Caco-2 (cell line): ENCODE measurements at regions of chr10 and their contacts with region 1.

Region 1: GRCh38 chr10:86899670-86900276 is 57.6 kb downstream of the MMRN2 start:
- DNase-seq: peak; percentile 55 to 76
- H3K4me3 ChIP-seq: no peak overlapping the region
- H3K4me3 Mint-ChIP-seq: no peak overlapping the region
- H3K27ac Mint-ChIP-seq: peak overlapping the region; percentile 27
- H3K4me1 ChIP-seq: no peaks in the 10 kb centered on the region
- H3K4me1 Mint-ChIP-seq: peaks cover 12% of the 10 kb centered on the region
- H3K27me3 ChIP-seq: no peaks in the 10 kb centered on the region
- H3K27me3 Mint-ChIP-seq: no peaks in the 10 kb centered on the region
- CTCF ChIP-seq: peak; percentile 72 to 83

Region 2: DNA sequence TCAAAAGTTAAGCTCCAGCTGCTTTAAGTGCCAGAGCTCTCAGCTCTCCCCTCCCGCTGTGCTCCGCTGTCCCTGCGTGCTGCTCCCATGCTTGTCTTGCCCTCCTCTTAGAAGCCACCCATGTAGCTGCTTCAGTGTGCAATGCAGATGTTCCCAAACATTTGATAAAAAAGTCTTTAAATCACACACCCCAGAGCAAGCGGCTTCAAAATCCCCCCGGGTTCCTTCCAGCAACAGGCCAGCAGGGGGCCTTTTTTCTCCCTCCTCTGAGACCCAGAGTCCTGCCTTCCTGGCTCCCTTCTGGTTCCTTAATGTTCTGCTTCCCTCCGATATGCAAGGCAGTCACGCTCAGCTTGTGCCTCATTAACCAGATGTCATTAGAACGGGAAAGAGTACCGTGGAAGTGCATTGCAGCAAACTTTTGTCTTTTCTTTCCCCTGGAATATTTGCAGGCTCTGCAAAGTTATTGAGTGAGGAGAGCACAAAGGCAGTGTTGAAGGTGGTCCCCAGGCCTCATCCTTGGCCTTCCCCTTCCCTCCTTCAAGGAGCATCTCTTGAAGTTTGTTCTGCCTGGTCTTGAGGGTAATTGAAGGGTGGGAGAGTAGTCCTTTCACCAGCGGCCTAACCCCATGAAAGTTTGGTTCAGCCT is 205.9 kb before region 1 on chr10:
- CTCF ChIA-PET with region 1: interaction called, 5 read pairs
- POLR2A ChIA-PET with region 1: no interaction called
- intact Hi-C with region 1: loop called (anchors 1 kb)
- DNase-seq: peak in 1 of 2 experiments; percentile 60
- H3K4me3 ChIP-seq: no peak overlapping the region
- H3K4me3 Mint-ChIP-seq: no peak overlapping the region
- H3K27ac Mint-ChIP-seq: no peak overlapping the region
- H3K4me1 ChIP-seq: no peaks in the 10 kb centered on the region
- H3K4me1 Mint-ChIP-seq: no peaks in the 10 kb centered on the region
- H3K27me3 ChIP-seq: no peaks in the 10 kb centered on the region
- H3K27me3 Mint-ChIP-seq: peaks cover 2% of the 10 kb centered on the region
- CTCF ChIP-seq: peak; percentile 72 to 81

Region 3: DNA sequence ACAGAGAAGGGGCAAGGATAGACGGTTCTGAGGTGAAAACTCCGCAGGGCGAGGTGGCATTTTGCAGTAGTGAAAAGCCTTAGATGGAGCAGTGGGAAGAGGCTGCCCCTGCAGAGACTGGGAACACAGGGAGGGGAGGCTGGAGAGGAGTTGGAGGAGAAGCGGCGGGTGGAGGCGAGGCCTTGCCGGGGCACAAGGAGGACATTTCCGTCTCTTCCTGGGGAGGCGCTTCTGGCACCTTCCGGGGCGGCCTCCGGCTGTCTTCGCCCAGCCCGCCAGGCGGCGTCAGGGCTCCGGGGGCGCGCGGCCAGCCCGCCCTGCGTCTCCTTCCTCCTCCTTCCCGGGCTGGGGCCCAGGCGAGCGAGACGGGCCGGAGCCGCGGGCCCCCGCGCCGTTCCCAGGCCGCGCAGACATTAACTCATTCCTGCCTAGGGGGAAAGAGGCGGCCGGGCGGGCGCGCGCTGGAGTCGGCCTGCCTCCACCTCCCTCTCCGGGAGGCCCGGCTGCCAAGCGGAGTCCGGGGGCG is 188.7 kb before region 1 on chr10:
- CTCF ChIA-PET with region 1: no interaction called
- POLR2A ChIA-PET with region 1: no interaction called
- intact Hi-C with region 1: loop called (anchors 1 kb)
- DNase-seq: peak; percentile 88 to 96
- H3K4me3 ChIP-seq: peak overlapping the region; percentile 70
- H3K4me3 Mint-ChIP-seq: peak overlapping the region; percentile 86
- H3K27ac Mint-ChIP-seq: peak overlapping the region; percentile 88
- H3K4me1 ChIP-seq: peaks cover 11% of the 10 kb centered on the region
- H3K4me1 Mint-ChIP-seq: peaks cover 7% of the 10 kb centered on the region
- H3K27me3 ChIP-seq: no peaks in the 10 kb centered on the region
- H3K27me3 Mint-ChIP-seq: no peaks in the 10 kb centered on the region
- CTCF ChIP-seq: peak; percentile 84

Region 4: DNA sequence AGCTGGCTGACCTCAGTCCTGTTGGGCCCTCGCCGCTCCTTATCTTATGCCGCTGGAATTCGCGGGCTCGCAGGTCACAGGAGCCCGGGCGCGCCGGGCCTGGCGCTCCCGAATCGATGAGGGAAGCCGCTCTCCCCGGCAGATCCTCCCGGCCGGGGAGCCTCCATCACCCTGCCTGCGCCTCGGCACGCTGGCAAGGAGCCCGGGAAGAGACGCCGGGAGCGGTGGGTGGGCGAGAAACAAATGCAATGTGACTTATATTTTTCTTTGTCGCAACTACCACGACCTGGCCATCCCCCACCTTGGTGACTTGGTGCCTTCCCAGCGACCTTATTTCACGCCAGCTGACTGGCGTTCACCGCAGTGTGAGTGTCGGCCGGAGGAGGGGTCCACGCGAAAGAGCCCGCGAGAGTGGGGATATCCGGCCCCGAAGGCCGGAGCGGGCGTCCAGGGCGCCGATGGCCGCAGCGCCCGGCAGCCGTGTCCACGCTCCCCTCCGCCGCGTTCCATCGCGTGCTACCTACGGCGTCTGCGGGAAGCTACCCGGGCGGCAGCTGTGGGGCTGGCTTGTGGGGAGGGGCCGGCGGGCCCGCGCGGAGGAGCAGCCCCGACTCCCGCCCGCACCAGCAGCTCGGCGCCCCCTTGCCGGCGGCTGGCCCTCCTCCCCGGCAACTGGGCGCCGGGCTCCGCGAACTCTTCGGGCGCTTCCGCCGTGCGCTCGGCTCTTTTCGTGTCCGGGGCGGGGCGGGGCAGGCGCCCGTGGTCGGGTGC is 143.8 kb before region 1 on chr10:
- CTCF ChIA-PET with region 1: no interaction called
- POLR2A ChIA-PET with region 1: no interaction called
- intact Hi-C with region 1: loop called (anchors 5 kb)
- DNase-seq: peak; percentile 88 to 92
- H3K4me3 ChIP-seq: peak overlapping the region; percentile 63
- H3K4me3 Mint-ChIP-seq: peak overlapping the region; percentile 76
- H3K27ac Mint-ChIP-seq: peak overlapping the region; percentile 85
- H3K4me1 ChIP-seq: peaks cover 28% of the 10 kb centered on the region
- H3K4me1 Mint-ChIP-seq: peaks cover 38% of the 10 kb centered on the region
- H3K27me3 ChIP-seq: no peaks in the 10 kb centered on the region
- H3K27me3 Mint-ChIP-seq: no peaks in the 10 kb centered on the region
- CTCF ChIP-seq: no peak